Aorta (tissue), 5 donors: ENCODE measurements at regions of chr11 and their contacts with region 1.

Region 1: GRCh38 chr11:69888483-69889076 is 69.4 kb upstream of the FGF3 start:
- DNase-seq: peak in 1 of 2 donors; percentile 67
- ATAC-seq: no peak
- H3K4me3 ChIP-seq: no peak overlapping the region
- H3K27ac ChIP-seq: no peak overlapping the region
- H3K4me1 ChIP-seq: no peaks in the 10 kb centered on the region
- H3K27me3 ChIP-seq: no peaks in the 10 kb centered on the region

Region 2: GRCh38 chr11:69683764-69684333 is 204.7 kb before region 1 on chr11:
- intact Hi-C with region 1: loop called in 1 of 2 experiments (anchors 2 kb)
- DNase-seq: peak in 1 of 2 donors; percentile 72
- ATAC-seq: peak; percentile 39
- H3K4me3 ChIP-seq: no peak overlapping the region
- H3K27ac ChIP-seq: no peak overlapping the region
- H3K4me1 ChIP-seq: no peaks in the 10 kb centered on the region
- H3K27me3 ChIP-seq: no peaks in the 10 kb centered on the region

Region 3: DNA sequence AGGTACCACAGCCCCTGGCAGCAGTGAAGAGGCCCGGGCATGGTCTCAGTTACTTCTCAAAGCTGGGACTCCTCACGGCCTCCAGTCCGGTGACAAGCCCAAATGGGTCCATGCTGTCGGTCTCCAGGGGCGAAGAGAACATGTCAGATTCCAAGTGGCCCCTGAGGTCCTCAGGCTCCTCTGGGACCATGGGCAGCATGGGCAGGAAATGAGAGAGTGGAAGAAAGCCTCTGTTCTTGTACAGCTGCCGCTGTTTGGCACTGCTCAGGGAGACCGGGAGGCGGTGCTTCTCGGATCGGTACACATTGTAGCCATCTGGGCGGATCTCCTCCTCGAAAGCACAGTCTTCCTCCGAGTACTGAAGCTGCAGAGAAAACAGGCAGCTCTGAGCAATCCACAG is 189.4 kb before region 1 on chr11:
- intact Hi-C with region 1: loop called in 1 of 2 experiments (anchors 10 kb)
- DNase-seq: peak in 1 of 2 donors; percentile 71
- ATAC-seq: no peak
- H3K4me3 ChIP-seq: no peak overlapping the region
- H3K27ac ChIP-seq: no peak overlapping the region
- H3K4me1 ChIP-seq: no peaks in the 10 kb centered on the region
- H3K27me3 ChIP-seq: no peaks in the 10 kb centered on the region

Region 4: GRCh38 chr11:69791276-69792180 is 97.1 kb before region 1 on chr11:
- intact Hi-C with region 1: no loop called
- DNase-seq: peak in 1 of 2 donors; percentile 63
- ATAC-seq: peak; percentile 71
- H3K4me3 ChIP-seq: no peak overlapping the region
- H3K27ac ChIP-seq: no peak overlapping the region
- H3K4me1 ChIP-seq: no peaks in the 10 kb centered on the region
- H3K27me3 ChIP-seq: no peaks in the 10 kb centered on the region

Region 5: DNA sequence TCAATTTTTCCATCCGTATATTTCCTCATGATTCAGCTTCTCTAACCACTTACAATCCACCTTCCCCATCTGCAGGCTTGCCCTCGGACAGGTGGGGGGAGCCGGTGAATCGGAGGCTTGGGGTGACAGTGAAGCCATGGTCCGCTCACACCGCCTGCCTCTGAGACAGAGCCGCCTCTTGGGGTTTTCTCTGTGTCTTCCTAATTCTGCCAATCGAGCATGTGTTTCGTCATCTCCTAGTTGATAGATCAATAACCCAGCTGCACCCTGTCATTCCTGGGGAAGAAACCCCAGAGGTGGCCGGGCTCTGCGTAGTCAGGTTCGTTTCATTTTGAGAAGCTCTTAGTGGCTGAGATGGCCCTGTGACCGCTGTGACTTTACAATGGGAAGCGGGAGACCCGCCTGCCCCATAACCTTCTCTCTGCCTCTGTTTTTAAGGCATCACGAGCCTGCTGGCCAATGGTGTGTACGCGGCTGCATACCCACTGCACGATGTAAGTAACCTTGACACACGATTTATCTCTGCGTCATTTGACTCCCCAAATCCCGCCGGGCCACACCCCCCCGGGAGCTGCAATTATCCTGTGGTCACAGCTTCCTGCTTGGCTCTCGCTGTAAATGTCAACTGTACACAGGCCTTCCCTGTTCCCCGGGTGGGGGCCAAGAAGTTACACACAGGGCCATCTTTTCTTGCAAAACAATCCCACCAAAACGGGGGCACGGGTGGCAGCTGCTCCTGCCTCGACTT is 222.9 kb after region 1 on chr11:
- intact Hi-C with region 1: no loop called
- DNase-seq: peak in 1 of 2 donors; percentile 68
- ATAC-seq: peak; percentile 14
- H3K4me3 ChIP-seq: no peak overlapping the region
- H3K27ac ChIP-seq: no peak overlapping the region
- H3K4me1 ChIP-seq: peaks cover 0 to 1% of the 10 kb centered on the region in 2 donors
- H3K27me3 ChIP-seq: no peaks in the 10 kb centered on the region